Activated naive CD8-positive, alpha-beta T cell treated with anti-CD3 and anti-CD28 coated beads, Interleukin-2, amount 10 ng/mL, durations not matched to agents 7 days and 5 days (primary cell): ENCODE measurements at regions of chr12 and their contacts with region 1.

Region 1: GRCh38 chr12:53213348-53213747 is 6.3 kb upstream of the ITGB7 start:
- DNase-seq: peak; percentile 90
- ATAC-seq: peak; percentile 63
- H3K4me3 Mint-ChIP-seq: no peak overlapping the region
- H3K27ac Mint-ChIP-seq: peak overlapping the region; percentile 53
- H3K4me1 Mint-ChIP-seq: peaks cover 65% of the 10 kb centered on the region
- H3K27me3 Mint-ChIP-seq: no peaks in the 10 kb centered on the region

Region 2: DNA sequence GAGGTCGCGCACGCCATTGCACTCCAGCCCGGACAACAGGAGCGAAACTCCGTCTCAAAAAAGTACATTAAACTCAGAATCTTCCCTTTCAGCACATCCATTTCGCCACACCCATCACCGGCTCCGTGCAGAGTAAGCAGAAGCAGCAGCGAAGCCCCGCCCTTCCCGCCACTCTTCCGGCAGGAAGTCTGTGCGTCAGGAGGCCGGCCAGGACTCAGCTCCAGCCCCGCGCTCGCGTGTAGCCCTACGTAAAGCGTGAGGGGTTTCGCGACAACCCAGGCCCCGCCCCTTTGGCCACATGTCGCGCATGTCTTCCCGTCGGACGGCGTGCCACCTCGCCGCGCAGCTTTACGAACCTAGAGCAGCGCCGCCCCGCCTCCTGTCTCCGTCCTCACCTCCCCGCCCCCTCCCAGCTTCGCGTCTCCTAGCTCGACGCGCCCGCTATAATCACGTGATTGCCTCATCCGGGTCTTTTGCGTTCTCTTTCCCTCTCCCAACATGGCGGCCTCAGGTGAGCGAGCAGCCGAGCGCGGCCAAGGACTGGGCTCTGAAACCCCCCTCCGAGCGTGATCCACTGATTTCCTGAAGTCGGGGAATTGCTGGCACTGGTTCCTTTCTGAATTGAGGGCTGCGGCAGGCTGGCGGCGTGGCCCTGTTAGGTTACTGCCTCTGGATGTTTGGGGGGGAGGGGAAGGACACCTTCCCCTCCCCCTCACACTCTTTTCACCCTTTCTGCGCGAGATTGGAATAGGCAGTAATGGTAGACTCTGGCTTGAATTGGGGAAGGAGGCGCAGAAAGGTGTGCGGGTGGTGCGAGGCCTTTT is 207.2 kb before region 1 on chr12 and contains the start of gene EIF4B:
- POLR2A ChIA-PET with region 1: no interaction called
- DNase-seq: peak; percentile 97
- ATAC-seq: peak; percentile 97
- H3K4me3 Mint-ChIP-seq: peak within 1 kb of the TSS; percentile 98
- H3K27ac Mint-ChIP-seq: peak within 1 kb of the TSS; percentile 98
- H3K4me1 Mint-ChIP-seq: peaks cover 32% of the 10 kb centered on the region
- H3K27me3 Mint-ChIP-seq: peaks cover 6% of the 10 kb centered on the region
- total RNA-seq, gene EIF4B: 439 to 448 TPM

Region 3: GRCh38 chr12:53123578-53124351 is 89.6 kb before region 1 on chr12:
- POLR2A ChIA-PET with region 1: no interaction called
- DNase-seq: no peak
- ATAC-seq: no peak
- H3K4me3 Mint-ChIP-seq: no peak overlapping the region
- H3K27ac Mint-ChIP-seq: no peak overlapping the region
- H3K4me1 Mint-ChIP-seq: no peaks in the 10 kb centered on the region
- H3K27me3 Mint-ChIP-seq: no peaks in the 10 kb centered on the region

Region 4: DNA sequence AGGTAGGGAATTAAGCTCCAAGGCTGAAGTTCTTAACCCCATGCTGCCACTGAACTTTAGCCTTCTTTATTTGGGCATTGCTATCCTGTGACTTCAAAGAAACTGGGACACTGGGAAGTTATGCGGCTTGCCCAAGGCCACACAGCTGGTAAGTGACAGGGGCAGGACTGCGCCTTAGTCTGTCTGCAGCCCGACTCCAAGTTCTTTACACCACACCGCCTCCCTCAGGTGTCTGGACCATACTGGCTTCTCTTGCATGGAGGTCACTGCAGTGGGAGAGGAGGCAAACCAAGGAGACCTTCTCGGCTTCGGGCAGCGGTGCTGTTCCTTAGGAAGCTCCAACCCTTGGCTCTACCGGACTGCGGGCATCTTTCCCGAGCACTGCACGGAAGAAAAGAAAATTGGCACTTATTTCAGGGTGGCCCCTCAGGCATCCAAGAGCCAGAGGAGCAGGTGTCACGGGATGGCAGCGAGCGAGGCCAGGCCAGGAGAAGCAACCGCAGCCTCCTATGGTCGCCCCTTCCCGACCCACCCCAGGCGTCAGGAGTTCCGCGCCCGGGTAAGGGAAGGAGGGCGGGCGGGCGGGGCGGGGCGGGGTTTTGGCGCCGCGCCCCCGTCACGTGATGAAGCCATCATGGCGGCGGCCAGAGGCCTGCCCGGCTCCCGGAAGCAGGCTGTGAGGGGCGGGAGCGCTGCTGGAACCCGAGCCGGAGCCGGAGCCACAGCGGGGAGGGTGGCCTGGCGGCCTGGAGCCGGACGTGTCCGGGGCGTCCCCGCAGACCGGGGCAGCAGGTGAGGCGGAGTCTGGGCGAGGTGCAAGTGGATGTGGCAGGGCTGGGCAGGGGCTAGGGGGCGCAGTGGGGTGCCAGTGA is 38.4 kb after region 1 on chr12:
- POLR2A ChIA-PET with region 1: interaction called, 25 read pairs
- DNase-seq: peak; percentile 85
- ATAC-seq: peak; percentile 85
- H3K4me3 Mint-ChIP-seq: peak overlapping the region; percentile 98
- H3K27ac Mint-ChIP-seq: peak overlapping the region; percentile 95
- H3K4me1 Mint-ChIP-seq: peaks cover 41% of the 10 kb centered on the region
- H3K27me3 Mint-ChIP-seq: no peaks in the 10 kb centered on the region